ENCODE measurements at regions of chr2 and their contacts with region 1.

Region 1: GRCh38 chr2:118855451-118856279 is 8.2 kb upstream of the EN1 start:
- DNase-seq: no peak
- H3K4me3 ChIP-seq: peak overlapping the region; percentile 31 to 50 (median 38)
- H3K27ac ChIP-seq: no peak overlapping the region
- H3K4me1 ChIP-seq: peaks cover 15 to 72% (median 55%) of the 10 kb centered on the region in 4 donors
- H3K27me3 ChIP-seq: peaks cover 10 to 100% (median 85%) of the 10 kb centered on the region in 4 donors
- CTCF ChIP-seq: peak; percentile 88 to 99 (median 97)
- EP300 ChIP-seq: no peak
- POLR2A ChIP-seq: no peak

Region 2: DNA sequence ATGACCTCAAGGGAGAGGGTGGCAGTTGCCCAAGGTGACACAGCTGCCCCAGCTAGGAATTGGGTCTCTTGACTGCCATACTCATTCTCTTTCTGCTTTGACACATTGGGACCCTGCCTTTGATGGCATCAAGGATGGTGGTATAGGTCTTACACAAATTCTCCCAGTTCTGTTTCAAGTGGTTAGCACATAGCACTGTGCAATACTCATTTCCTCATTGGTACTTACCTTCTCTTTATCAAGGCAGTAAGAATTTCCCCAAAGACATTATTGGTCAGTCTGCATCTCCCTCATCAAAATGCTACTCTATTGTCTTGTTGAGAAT is 805.9 kb before region 1 on chr2:
- intact Hi-C with region 1: loop called (anchors 2 kb)
- DNase-seq: no peak
- H3K4me3 ChIP-seq: no peak overlapping the region
- H3K27ac ChIP-seq: no peak overlapping the region
- H3K4me1 ChIP-seq: peaks cover 0 to 5% (median 0%) of the 10 kb centered on the region in 4 donors
- H3K27me3 ChIP-seq: peaks cover 0 to 67% (median 5%) of the 10 kb centered on the region in 4 donors
- CTCF ChIP-seq: no peak
- EP300 ChIP-seq: no peak
- POLR2A ChIP-seq: no peak

Region 3: DNA sequence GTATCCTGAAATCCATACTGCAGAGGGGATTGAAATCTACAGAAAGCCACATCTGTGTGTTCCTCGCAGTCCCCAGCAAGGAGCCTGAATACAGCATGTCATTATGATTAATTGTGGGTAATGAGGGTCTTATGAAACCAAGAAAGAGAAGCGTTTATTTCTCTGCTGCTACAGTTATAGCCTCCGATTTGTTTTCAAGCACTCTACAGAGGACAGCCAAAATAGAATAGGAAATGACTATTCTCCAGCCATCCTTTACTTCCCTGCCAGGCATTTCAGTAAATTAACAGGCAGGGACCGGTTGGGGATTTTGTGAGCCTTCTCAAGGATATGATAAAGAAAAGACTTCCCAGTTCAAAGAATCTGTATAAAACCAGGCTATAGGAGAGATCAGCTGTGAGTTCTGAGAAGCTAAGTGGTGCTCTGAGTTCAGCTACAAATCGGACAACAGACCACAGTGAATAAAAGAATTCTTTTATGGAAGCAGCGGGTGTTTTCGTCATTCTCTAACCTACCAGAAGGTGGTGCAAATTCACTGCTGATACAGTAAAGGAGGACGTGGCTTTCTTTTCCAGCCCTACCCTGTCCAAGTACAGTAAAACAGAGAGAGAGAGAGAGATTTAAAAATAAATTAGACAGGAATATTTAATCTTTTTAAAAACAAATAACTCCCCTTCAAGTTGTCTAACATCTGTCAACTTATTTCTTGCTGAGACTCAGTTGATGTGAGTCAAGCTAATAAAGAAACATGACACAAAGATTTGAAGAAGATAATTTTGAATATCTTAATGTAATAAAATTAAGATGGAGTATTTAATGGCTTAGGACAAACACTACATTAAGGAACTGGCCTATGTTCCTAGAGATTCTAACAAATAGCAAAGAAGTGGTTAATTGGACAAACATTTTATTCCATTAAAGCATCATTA is 633.7 kb before region 1 on chr2:
- intact Hi-C with region 1: loop called (anchors 2 kb)
- DNase-seq: no peak
- H3K4me3 ChIP-seq: no peak overlapping the region
- H3K27ac ChIP-seq: no peak overlapping the region
- H3K4me1 ChIP-seq: peaks cover 12 to 18% (median 17%) of the 10 kb centered on the region in 4 donors
- H3K27me3 ChIP-seq: peaks cover 0 to 89% (median 46%) of the 10 kb centered on the region in 4 donors
- CTCF ChIP-seq: peak; percentile 48 to 62 (median 51)
- EP300 ChIP-seq: no peak
- POLR2A ChIP-seq: no peak

Region 4: GRCh38 chr2:118607641-118608040 is 248.0 kb before region 1 on chr2:
- intact Hi-C with region 1: no loop called
- DNase-seq: no peak
- H3K4me3 ChIP-seq: no peak overlapping the region
- H3K27ac ChIP-seq: no peak overlapping the region
- H3K4me1 ChIP-seq: no peaks in the 10 kb centered on the region
- H3K27me3 ChIP-seq: peaks cover 0 to 40% (median 0%) of the 10 kb centered on the region in 4 donors
- CTCF ChIP-seq: no peak
- EP300 ChIP-seq: no peak
- POLR2A ChIP-seq: no peak

Measured in esophagus muscularis mucosa (tissue), 4 donors.